Activated T-helper 1 cell treated with anti-CD3 and anti-CD28 coated beads, Interleukin-12 subunit alpha, Interleukin-12 subunit beta, Interleukin-2, Interleukin-4 antibody, amounts not matched to agents 30 ng/mL and 10 ng/mL and 1 ng/mL, durations not matched to agents 14 hours and 24 hours and 36 hours (primary cell): ENCODE measurements at regions of chr18 and their contacts with region 1.

Region 1: GRCh38 chr18:5546660-5547059 is 2.9 kb upstream of the EPB41L3 start:
- DNase-seq: no peak
- H3K4me3 Mint-ChIP-seq: no peak overlapping the region
- H3K27ac Mint-ChIP-seq: no peak overlapping the region
- H3K4me1 Mint-ChIP-seq: no peaks in the 10 kb centered on the region
- H3K27me3 Mint-ChIP-seq: peaks cover 35% of the 10 kb centered on the region

Region 2: DNA sequence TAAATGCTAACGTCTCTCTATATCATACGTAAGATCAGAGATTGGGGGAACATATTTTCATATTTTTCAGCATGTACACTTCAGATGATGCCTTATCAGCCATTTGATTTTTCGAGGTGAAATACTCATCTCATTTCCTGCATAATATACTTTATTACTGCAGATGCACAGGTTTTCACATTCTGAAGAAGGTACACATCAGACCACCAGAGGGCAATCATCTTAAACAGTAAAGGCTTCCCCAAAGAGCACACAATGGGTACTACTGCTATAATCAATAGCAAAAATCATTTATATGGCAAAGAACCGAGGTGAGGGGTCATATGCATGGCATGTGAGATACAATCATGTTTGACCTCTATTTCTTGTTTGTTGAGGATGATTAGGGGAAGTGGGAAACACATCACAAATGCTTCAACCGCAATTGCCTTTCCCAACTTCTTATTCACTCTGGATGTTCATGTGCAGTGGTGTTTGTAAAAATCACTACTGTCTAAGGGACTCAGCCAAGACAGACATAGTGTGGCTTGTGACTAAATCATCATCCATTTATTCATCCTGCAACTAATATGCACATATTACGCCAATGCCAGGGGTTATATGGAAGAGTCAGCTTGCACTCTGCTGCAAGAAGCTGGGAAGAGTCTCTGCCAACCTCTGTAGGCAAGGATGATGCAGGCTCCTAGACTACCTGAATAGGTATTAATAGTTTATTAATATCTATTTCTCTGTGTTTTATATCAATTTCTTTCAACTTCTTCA is 121.6 kb before region 1 on chr18:
- intact Hi-C with region 1: loop called (anchors 10 kb)
- DNase-seq: no peak
- H3K4me3 Mint-ChIP-seq: no peak overlapping the region
- H3K27ac Mint-ChIP-seq: no peak overlapping the region
- H3K4me1 Mint-ChIP-seq: no peaks in the 10 kb centered on the region
- H3K27me3 Mint-ChIP-seq: no peaks in the 10 kb centered on the region

Region 3: GRCh38 chr18:5456577-5457463 is 89.8 kb before region 1 on chr18:
- intact Hi-C with region 1: loop called (anchors 10 kb)
- DNase-seq: no peak
- H3K4me3 Mint-ChIP-seq: peak overlapping the region; percentile 55
- H3K27ac Mint-ChIP-seq: peak overlapping the region; percentile 70
- H3K4me1 Mint-ChIP-seq: peaks cover 6% of the 10 kb centered on the region
- H3K27me3 Mint-ChIP-seq: no peaks in the 10 kb centered on the region

Region 4: GRCh38 chr18:5574843-5575242 is 28.2 kb after region 1 on chr18:
- intact Hi-C with region 1: no loop called
- DNase-seq: no peak
- H3K4me3 Mint-ChIP-seq: no peak overlapping the region
- H3K27ac Mint-ChIP-seq: no peak overlapping the region
- H3K4me1 Mint-ChIP-seq: no peaks in the 10 kb centered on the region
- H3K27me3 Mint-ChIP-seq: no peaks in the 10 kb centered on the region